HepG2 (cell line): ENCODE measurements at regions of chr6 and their contacts with region 1.

Region 1: DNA sequence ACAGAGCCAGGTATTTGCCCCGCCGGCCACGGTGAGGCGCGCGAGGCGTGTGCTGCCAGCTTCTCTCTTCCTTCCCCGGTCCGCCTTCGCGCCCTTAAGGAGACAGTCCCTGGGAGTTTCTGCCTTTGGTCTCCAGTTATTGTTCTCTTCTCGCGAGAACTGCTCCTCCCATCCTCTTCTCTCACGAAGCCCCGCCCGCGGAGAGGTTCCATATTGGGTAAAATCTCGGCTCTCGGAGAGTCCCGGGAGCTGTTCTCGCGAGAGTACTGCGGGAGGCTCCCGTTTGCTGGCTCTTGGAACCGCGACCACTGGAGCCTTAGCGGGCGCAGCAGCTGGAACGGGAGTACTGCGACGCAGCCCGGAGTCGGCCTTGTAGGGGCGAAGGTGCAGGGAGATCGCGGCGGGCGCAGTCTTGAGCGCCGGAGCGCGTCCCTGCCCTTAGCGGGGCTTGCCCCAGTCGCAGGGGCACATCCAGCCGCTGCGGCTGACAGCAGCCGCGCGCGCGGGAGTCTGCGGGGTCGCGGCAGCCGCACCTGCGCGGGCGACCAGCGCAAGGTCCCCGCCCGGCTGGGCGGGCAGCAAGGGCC is at the start of gene MAPK14:
- DNase-seq: peak; percentile 100
- ATAC-seq: peak; percentile 92
- H3K4me3 ChIP-seq: peak within 1 kb of the TSS; percentile 86 to 97 (median 96)
- H3K27ac ChIP-seq: peak within 1 kb of the TSS; percentile 94
- H3K4me1 ChIP-seq: peaks cover 44% of the 10 kb centered on the region
- H3K27me3 ChIP-seq: no peaks in the 10 kb centered on the region; a peak in 1 of 5 replicates
- CTCF ChIP-seq: peak; percentile 99
- EP300 ChIP-seq: peak in 1 of 2 experiments; percentile 61; a peak in 1 of 4 replicates
- POLR2A ChIP-seq: peak; percentile 99
- RAD21 ChIP-seq: peak; percentile 98
- total RNA-seq, gene MAPK14: 67.3 and 74.9 TPM in 2 replicates

Region 2: DNA sequence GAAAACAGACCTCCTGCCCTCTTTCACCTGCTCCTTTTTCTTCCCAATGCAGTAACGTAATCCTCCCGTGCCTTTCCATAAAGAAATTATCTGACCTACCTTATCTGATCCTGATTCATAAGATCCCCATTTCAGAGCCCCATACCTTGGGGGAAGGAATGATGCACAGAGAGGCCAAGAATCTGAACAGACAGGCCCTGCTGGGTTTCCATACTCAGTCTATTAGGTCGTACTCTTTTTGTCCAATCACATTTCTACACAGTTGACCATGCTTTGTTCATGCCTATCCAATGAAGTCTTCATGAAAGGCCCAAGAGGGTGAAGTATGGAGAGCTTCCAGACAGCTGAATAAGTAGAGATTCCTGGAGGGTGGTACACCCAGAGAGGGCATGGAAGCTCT is 132.0 kb before region 1 on chr6:
- CTCF ChIA-PET with region 1: no interaction called
- POLR2A ChIA-PET with region 1: no interaction called
- in situ Hi-C with region 1: no loop called
- intact Hi-C with region 1: no loop called
- DNase-seq: no peak
- ATAC-seq: peak; percentile 37; the same call in 2 of the 3 replicates
- H3K4me3 ChIP-seq: no peak overlapping the region
- H3K27ac ChIP-seq: no peak overlapping the region
- H3K4me1 ChIP-seq: no peaks in the 10 kb centered on the region
- H3K27me3 ChIP-seq: no peaks in the 10 kb centered on the region
- CTCF ChIP-seq: no peak
- EP300 ChIP-seq: no peak
- POLR2A ChIP-seq: no peak
- RAD21 ChIP-seq: no peak

Region 3: GRCh38 chr6:35948725-35949124 is 78.9 kb before region 1 on chr6:
- CTCF ChIA-PET with region 1: no interaction called
- POLR2A ChIA-PET with region 1: interaction called, 5 read pairs
- in situ Hi-C with region 1: no loop called
- intact Hi-C with region 1: loop called (anchors 10 kb)
- DNase-seq: peak; percentile 38
- ATAC-seq: peak; percentile 74
- H3K4me3 ChIP-seq: no peak overlapping the region
- H3K27ac ChIP-seq: no peak overlapping the region
- H3K4me1 ChIP-seq: peaks cover 13% of the 10 kb centered on the region
- H3K27me3 ChIP-seq: no peaks in the 10 kb centered on the region
- CTCF ChIP-seq: peak; percentile 47
- EP300 ChIP-seq: no peak
- POLR2A ChIP-seq: no peak
- RAD21 ChIP-seq: no peak

Region 4: DNA sequence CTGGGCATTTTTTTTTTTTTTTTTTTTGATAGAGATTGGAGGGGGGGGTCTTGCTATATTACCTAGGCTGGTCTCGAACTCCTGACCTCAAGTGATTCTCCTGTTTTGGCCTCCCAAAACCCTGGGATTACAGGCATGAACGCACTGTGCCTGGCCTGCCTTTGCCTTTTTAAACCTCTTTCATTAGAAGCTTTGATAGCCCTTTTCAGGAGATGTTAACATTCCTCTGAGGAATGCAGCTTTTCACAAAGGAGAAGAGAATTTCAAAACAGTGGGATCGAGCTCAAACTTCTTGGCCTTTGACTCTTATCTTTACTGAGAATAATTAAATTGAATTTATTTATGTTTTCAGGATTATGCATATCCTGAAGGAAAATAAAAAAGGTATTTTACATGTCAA is 34.4 kb before region 1 on chr6:
- CTCF ChIA-PET with region 1: no interaction called
- POLR2A ChIA-PET with region 1: no interaction called
- in situ Hi-C with region 1: no loop called
- intact Hi-C with region 1: no loop called
- DNase-seq: no peak
- ATAC-seq: no peak
- H3K4me3 ChIP-seq: no peak overlapping the region
- H3K27ac ChIP-seq: no peak overlapping the region
- H3K4me1 ChIP-seq: no peaks in the 10 kb centered on the region
- H3K27me3 ChIP-seq: peaks cover 0 to 25% of the 10 kb centered on the region in 2 experiments; a peak in 3 of 5 replicates
- CTCF ChIP-seq: no peak
- EP300 ChIP-seq: no peak
- POLR2A ChIP-seq: no peak
- RAD21 ChIP-seq: no peak

Region 5: GRCh38 chr6:36038120-36038876 is 10.7 kb after region 1 on chr6:
- CTCF ChIA-PET with region 1: no interaction called
- POLR2A ChIA-PET with region 1: interaction called, 16 read pairs
- in situ Hi-C with region 1: no loop called
- intact Hi-C with region 1: no loop called
- DNase-seq: no peak
- ATAC-seq: peak; percentile 30
- H3K4me3 ChIP-seq: no peak overlapping the region
- H3K27ac ChIP-seq: peak overlapping the region; percentile 70
- H3K4me1 ChIP-seq: peaks cover 64% of the 10 kb centered on the region
- H3K27me3 ChIP-seq: no peaks in the 10 kb centered on the region
- CTCF ChIP-seq: no peak
- EP300 ChIP-seq: no peak
- POLR2A ChIP-seq: no peak
- RAD21 ChIP-seq: no peak

Region 6: GRCh38 chr6:36075656-36076055 is 48.1 kb after region 1 on chr6:
- CTCF ChIA-PET with region 1: interaction called, 3 read pairs
- POLR2A ChIA-PET with region 1: interaction called, 6 read pairs
- in situ Hi-C with region 1: no loop called
- intact Hi-C with region 1: loop called (anchors 1 kb)
- DNase-seq: peak; percentile 71
- ATAC-seq: peak; percentile 98
- H3K4me3 ChIP-seq: no peak overlapping the region
- H3K27ac ChIP-seq: peak overlapping the region; percentile 43
- H3K4me1 ChIP-seq: peaks cover 14% of the 10 kb centered on the region
- H3K27me3 ChIP-seq: no peaks in the 10 kb centered on the region
- CTCF ChIP-seq: peak; percentile 87
- EP300 ChIP-seq: peak in 1 of 2 experiments; percentile 32; a peak in 1 of 4 replicates
- POLR2A ChIP-seq: no peak
- RAD21 ChIP-seq: peak; percentile 41; the same call in 1 of the 2 replicates

Region 7: DNA sequence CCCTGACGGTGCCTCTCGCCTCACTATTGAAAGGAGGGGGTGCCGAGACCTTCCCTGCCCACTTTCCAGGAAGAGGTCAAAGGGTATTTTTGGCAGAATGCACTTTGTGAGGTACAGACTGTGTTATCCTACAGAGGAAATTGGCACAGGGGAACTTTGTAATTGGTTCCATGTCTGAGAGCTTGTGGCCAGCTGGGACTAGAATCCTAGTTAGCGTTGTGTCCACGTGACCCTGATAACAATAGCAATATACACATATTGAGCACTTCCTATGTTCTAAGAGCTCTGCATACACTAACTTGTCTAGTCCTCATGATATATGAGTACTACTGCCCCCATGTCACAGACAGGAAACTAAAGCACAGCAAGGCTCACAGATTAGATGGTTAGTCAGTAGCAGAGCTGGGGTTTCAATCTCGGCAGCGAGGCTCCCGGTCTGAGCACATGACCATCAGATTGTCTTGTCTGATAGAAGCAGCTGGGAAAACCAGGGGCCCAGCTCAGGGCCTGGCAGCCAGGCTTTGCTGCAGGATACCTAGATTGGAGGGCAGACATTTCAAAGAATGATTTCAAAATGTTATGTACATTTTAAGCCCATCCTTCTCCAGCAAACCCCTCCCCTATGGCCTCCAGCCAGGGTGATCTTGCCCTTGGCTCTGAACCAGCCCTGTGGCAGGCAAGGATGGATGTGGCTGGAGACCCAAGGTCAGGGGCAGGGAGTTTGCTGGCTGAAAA is 104.1 kb after region 1 on chr6:
- CTCF ChIA-PET with region 1: no interaction called
- POLR2A ChIA-PET with region 1: interaction called, 34 read pairs
- in situ Hi-C with region 1: no loop called
- intact Hi-C with region 1: no loop called
- DNase-seq: peak; percentile 84
- ATAC-seq: peak; percentile 22
- H3K4me3 ChIP-seq: peak overlapping the region; percentile 75 to 92 (median 75)
- H3K27ac ChIP-seq: peak overlapping the region; percentile 90
- H3K4me1 ChIP-seq: peaks cover 66% of the 10 kb centered on the region
- H3K27me3 ChIP-seq: no peaks in the 10 kb centered on the region
- CTCF ChIP-seq: no peak
- EP300 ChIP-seq: peak in 1 of 2 experiments; percentile 57; a peak in 1 of 4 replicates
- POLR2A ChIP-seq: no peak; a peak in 1 of 4 replicates
- RAD21 ChIP-seq: no peak

Region 8: GRCh38 chr6:36360241-36361054 is 332.9 kb after region 1 on chr6:
- CTCF ChIA-PET with region 1: interaction called, 6 read pairs
- POLR2A ChIA-PET with region 1: no interaction called
- in situ Hi-C with region 1: no loop called
- intact Hi-C with region 1: loop called (anchors 1 kb)
- DNase-seq: peak; percentile 82
- ATAC-seq: peak; percentile 92
- H3K4me3 ChIP-seq: no peak overlapping the region
- H3K27ac ChIP-seq: no peak overlapping the region
- H3K4me1 ChIP-seq: peaks cover 23% of the 10 kb centered on the region
- H3K27me3 ChIP-seq: 0 out of 5 replicates have a peak, but pooled peaks cover 0 to 2% of the 10 kb centered on the region in 2 experiments
- CTCF ChIP-seq: peak; percentile 97
- EP300 ChIP-seq: no peak
- POLR2A ChIP-seq: no peak
- RAD21 ChIP-seq: peak; percentile 94